ENCODE measurements at regions of chr7 and their contacts with region 1.

Region 1: DNA sequence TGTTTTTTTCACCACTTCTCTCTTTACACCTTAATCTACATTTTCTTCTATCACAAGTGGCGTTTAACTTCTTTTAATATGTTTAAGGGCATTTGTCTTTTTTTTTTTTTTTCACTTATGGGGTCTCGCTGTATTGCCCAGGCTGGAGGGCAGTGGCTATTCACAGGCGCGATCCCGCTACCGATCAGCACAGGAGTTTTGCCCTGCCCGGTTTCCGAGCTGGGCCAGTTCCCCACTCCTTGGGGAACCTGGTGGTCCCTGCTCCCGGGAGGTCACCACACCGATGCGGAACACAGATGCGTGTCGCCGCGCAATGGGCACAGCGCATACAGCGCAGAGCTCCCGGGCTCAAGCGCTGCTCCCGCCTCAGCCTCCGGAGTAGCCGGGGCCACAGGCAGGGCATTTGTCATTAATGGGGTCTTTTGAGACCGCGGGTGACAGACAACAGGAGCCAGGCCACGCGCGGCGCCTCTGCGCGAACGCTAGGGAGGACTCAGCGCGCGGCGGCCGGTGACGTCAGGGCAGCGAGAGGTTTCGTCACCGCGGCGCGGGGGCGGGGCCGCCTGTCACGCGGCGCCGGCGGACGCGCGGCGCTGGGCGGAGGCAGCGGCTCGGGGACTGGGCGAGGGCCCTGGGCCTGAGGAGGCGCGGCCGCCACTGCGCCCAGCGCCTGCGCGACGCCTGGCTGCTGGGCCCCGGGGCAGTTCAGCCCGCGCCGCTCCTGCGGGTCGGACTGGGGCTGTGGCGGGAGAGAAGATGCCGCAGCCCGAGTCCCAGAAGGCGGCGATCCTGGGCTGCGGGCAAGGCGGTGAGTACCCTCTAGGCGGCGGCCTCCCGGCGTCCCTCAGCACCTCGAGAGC is at the start of gene GALNT11:
- DNase-seq: peak; percentile 84
- H3K4me3 ChIP-seq: peak within 1 kb of the TSS; percentile 76 to 80 (median 76)
- H3K27ac ChIP-seq: peak within 1 kb of the TSS; percentile 27
- H3K4me1 ChIP-seq: peaks cover 6% of the 10 kb centered on the region
- H3K27me3 ChIP-seq: peaks cover 0 to 2% of the 10 kb centered on the region in 2 experiments
- CTCF ChIP-seq: peak; percentile 8 to 52
- POLR2A ChIP-seq: peak; percentile 91
- total RNA-seq, gene GALNT11: 27.6 and 27.7 TPM in 2 replicates

Region 2: GRCh38 chr7:151876899-151877777 is 148.2 kb before region 1 on chr7 and contains the start of gene PRKAG2:
- CTCF ChIA-PET with region 1: no interaction called
- POLR2A ChIA-PET with region 1: no interaction called
- dilution Hi-C with region 1: no loop called
- intact Hi-C with region 1: loop called (anchors 5 kb)
- DNase-seq: peak; percentile 40
- H3K4me3 ChIP-seq: peak within 1 kb of the TSS; percentile 41 to 69 (median 48)
- H3K27ac ChIP-seq: no peak within 1 kb of the TSS
- H3K4me1 ChIP-seq: peaks cover 11% of the 10 kb centered on the region
- H3K27me3 ChIP-seq: peaks cover 27 to 37% of the 10 kb centered on the region in 2 experiments
- CTCF ChIP-seq: no peak
- POLR2A ChIP-seq: no peak
- total RNA-seq, gene PRKAG2: 45.1 and 51.5 TPM in 2 replicates

Region 3: GRCh38 chr7:152136686-152137085 is 111.4 kb after region 1 on chr7:
- CTCF ChIA-PET with region 1: no interaction called
- POLR2A ChIA-PET with region 1: no interaction called
- dilution Hi-C with region 1: no loop called
- intact Hi-C with region 1: loop called (anchors 5 kb)
- DNase-seq: no peak
- H3K4me3 ChIP-seq: no peak overlapping the region
- H3K27ac ChIP-seq: no peak overlapping the region
- H3K4me1 ChIP-seq: peaks cover 12% of the 10 kb centered on the region
- H3K27me3 ChIP-seq: no peaks in the 10 kb centered on the region
- CTCF ChIP-seq: no peak
- POLR2A ChIP-seq: no peak